Transverse colon (tissue), 4 donors: ENCODE measurements at regions of chr17 and their contacts with region 1.

Region 1: DNA sequence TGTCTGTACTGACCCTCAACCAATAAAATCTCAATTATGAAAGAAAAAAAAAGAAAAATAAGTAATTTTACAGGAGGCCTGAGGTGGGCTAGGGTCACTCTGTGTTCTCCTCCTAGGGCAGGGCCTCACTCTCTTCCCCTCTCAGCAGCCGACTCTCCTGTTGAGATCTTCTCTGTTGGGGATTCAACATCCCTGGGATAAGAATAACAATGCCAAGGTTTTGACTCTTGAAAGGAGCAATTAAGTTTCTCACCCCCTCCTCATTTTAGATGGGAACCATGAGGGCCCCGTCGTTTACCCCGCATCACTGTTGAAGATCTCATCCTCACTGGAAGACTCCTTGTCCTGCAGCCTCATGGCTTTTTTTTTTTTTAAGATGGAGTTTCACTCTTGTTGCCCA is 21.5 kb upstream of the BRCA1 start:
- DNase-seq: no peak
- H3K4me3 ChIP-seq: no peak overlapping the region
- H3K27ac ChIP-seq: no peak overlapping the region
- H3K4me1 ChIP-seq: no peaks in the 10 kb centered on the region
- H3K27me3 ChIP-seq: no peaks in the 10 kb centered on the region
- CTCF ChIP-seq: no peak
- EP300 ChIP-seq: no peak
- POLR2A ChIP-seq: no peak

Region 2: DNA sequence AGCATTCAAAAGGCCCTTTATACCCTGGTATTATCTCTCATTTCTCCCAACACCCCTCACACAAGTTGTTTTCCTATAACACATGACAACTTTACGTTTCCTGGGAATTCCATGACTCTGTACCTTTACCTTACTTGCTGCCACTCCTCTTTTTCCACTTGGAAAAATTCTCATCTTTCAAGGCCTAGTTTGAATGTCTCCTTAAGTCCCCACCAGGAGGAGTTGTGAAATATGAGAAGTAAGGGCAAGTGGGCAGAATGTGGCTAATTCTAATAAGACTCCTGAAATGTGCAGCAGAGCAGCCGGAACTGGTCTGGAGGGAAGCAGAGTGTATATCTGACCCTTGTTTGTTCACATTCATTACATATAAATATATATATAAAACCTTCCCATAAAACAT is 61.2 kb before region 1 on chr17:
- in situ Hi-C with region 1: no loop called
- intact Hi-C with region 1: no loop called
- DNase-seq: no peak
- H3K4me3 ChIP-seq: no peak overlapping the region
- H3K27ac ChIP-seq: no peak overlapping the region
- H3K4me1 ChIP-seq: no peaks in the 10 kb centered on the region
- H3K27me3 ChIP-seq: no peaks in the 10 kb centered on the region
- CTCF ChIP-seq: no peak
- EP300 ChIP-seq: no peak
- POLR2A ChIP-seq: no peak

Region 3: DNA sequence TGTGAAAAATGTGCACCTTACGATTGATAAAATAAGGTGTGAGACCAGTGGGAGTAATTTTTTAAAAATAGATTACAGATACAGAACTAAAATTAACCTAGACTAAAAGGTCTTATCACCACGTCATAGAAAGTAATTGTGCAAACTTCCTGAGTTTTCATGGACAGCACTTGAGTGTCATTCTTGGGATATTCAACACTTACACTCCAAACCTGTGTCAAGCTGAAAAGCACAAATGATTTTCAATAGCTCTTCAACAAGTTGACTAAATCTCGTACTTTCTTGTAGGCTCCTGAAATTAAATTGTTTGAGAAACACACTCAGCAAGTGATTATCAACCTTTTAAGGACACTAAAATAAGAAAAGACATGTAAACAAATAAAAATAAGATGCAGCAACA is 42.0 kb before region 1 on chr17:
- in situ Hi-C with region 1: no loop called
- intact Hi-C with region 1: no loop called
- DNase-seq: no peak
- H3K4me3 ChIP-seq: no peak overlapping the region
- H3K27ac ChIP-seq: no peak overlapping the region
- H3K4me1 ChIP-seq: no peaks in the 10 kb centered on the region
- H3K27me3 ChIP-seq: no peaks in the 10 kb centered on the region
- CTCF ChIP-seq: no peak
- EP300 ChIP-seq: no peak
- POLR2A ChIP-seq: no peak

Region 4: DNA sequence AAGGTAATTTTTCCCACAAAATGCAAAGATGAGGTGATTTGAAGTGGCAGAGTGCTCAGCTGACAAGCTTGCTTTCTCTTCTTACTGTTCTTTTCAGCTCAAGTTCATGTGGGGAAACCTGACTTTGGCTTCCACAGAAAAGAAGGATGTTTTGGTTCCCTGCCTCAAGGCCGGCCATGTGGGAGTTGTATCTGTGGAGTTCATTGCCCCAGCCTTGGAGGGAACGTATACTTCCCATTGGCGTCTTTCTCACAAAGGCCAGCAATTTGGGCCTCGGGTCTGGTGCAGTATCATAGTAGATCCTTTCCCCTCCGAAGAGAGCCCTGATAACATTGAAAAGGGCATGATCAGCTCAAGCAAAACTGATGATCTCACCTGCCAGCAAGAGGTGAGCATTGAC is 46.6 kb after region 1 on chr17:
- in situ Hi-C with region 1: no loop called
- intact Hi-C with region 1: loop called (anchors 2 kb)
- DNase-seq: no peak
- H3K4me3 ChIP-seq: no peak overlapping the region
- H3K27ac ChIP-seq: no peak overlapping the region
- H3K4me1 ChIP-seq: no peaks in the 10 kb centered on the region
- H3K27me3 ChIP-seq: no peaks in the 10 kb centered on the region
- CTCF ChIP-seq: no peak
- EP300 ChIP-seq: no peak
- POLR2A ChIP-seq: no peak